ENCODE measurements at regions of chr5 and their contacts with region 1.

Region 1: DNA sequence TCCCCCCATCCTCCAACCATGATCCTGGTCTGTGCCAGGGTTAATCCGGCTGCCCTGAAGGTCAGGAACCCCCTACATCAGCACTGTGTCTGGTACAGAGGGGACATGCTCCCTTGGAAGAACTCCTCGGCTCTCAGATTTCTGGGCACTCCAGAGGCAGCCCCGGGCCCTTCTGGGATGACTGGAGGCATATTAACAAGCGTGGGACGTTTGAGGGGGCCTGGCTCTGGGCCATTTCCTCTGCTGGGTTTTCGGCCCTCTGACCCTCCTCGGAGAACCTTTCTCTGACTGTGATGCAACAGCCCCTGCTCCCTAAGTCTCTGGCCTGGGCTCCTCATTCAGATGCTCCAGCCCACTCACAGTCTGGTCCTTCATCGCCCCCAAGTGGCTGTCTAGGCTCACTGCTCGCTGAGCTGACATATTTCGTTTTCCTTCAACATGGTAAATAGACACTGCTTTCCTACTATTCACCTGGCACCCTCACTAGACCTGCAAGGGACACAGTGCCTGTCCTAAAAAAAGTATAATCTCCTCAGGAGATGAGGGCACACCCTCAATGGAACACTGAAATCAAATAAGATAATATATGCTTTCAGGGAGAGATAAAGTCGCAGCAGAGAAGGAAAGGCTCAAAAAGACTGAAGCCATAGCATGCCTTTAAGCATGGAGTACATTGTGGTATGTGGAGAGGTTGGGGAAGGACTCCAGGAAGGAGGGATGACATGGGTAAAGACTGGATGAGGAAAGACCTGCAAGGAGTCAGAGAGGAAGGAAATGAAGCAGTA is 404.7 kb upstream of the TRPC7 start:
- DNase-seq: no peak
- H3K4me3 ChIP-seq: no peak overlapping the region
- H3K27me3 ChIP-seq: no peaks in the 10 kb centered on the region
- CTCF ChIP-seq: peak; percentile 95

Region 2: GRCh38 chr5:136249678-136250266 is 520.3 kb before region 1 on chr5:
- CTCF ChIA-PET with region 1: interaction called, 70 read pairs
- POLR2A ChIA-PET with region 1: no interaction called
- DNase-seq: peak; percentile 5
- H3K4me3 ChIP-seq: no peak overlapping the region
- H3K27me3 ChIP-seq: peaks cover 2% of the 10 kb centered on the region; the same call in 1 of the 2 replicates
- CTCF ChIP-seq: peak; percentile 97

Region 3: DNA sequence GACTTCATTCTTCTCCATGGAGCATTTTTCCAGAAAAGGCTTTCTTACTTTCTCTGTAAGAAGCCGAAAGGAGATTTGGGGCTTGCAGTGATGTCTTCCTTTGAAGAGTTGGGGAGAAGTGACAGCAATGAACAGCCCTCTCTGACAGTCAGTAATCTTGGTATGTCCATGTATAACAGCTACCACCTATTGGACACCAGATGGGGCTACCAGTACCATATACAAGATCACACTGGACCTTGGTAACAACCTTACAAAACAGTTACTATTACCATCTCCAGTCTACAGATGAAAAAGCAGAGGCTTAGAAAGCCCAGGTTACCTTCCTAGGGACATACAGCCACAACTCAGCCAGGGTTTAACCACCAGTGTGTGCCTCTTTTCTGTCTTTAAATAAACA is 132.0 kb before region 1 on chr5:
- CTCF ChIA-PET with region 1: interaction called, 73 read pairs
- POLR2A ChIA-PET with region 1: no interaction called
- DNase-seq: no peak
- H3K4me3 ChIP-seq: no peak overlapping the region
- H3K27me3 ChIP-seq: peaks cover 4% of the 10 kb centered on the region; the same call in 1 of the 2 replicates
- CTCF ChIP-seq: peak; percentile 34

Region 4: DNA sequence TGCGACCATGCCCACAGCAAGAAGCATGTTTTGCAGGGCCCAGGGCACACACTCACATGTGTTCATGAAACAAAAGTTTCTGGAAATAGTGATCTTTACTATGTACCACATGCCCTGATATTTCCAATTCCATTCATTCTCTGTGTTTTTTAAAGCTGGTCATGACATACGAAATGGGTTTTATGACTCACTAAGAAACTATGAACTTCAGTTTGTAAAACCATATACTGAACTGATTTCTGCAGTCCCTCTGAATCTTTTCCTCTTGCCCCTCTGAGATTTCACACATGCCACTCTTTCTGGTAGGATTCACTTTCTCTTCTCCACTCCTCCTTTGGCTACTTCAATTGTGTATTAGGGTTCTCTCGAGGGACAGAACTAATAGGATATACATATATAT is 11.4 kb after region 1 on chr5:
- CTCF ChIA-PET with region 1: interaction called, 12 read pairs
- POLR2A ChIA-PET with region 1: no interaction called
- DNase-seq: peak; percentile 52
- H3K4me3 ChIP-seq: no peak overlapping the region
- H3K27me3 ChIP-seq: no peaks in the 10 kb centered on the region
- CTCF ChIP-seq: no peak